Right ventricle myocardium inferior (tissue), 1 donor: ENCODE measurements at regions of chr12 and their contacts with region 1.

Region 1: DNA sequence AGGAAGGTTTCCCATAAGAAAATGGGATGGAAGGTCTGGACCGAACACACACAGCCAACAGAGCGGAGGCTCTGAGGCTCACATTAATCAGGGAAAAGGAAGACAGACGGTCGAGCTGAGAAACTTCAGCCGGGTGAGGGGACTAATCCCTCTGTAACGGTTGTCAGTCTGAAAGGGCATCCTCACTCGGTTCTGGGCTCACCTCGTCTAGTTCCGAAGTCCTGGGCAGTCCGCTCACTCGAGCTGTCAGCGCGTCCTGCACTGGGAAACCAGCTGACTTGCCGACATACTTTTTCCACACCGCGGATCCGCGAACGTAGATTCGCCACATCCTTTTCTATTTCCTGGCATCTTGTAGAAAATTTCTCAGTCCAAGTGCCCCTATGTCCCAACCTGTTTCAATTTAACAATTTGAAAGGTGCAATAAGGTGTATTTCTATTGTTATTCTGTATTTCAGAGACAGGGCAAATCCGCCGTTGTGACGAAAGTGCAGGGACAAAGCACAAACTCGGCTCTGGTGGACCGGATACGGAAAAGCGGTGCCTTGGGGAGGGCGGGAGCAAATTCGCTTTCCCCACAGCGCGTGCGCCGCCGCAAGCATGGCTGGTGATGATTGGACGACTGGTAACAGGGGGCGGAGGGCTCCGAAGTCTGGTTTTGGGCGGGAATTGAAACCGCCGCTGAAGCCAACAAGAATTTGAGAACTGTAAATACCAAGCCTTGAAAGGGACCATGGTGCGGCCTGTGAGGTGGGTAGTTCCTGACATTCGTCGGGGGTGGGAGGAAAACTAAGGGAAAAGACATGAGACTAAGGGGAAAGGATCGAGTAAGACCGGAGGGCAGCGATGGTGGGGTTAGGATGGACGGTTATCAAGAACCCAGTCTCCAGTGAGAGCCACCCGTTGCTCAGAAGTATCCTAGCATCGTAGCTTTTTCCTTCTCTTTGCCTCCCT is at the start of gene RAD51AP1:
- DNase-seq: peak; percentile 97
- ATAC-seq: peak; percentile 100
- total RNA-seq, gene RAD51AP1: 1.5 TPM

Region 2: GRCh38 chr12:3872800-3873636 is 665.5 kb before region 1 on chr12 and contains the start of gene PARP11:
- intact Hi-C with region 1: loop called (anchors 10 kb)
- DNase-seq: peak; percentile 100
- ATAC-seq: peak; percentile 100
- total RNA-seq, gene PARP11: 5.5 TPM

Region 3: GRCh38 chr12:4366090-4366489 is 172.4 kb before region 1 on chr12:
- intact Hi-C with region 1: no loop called
- DNase-seq: no peak
- ATAC-seq: no peak